GM10248 (cell line): ENCODE measurements at regions of chr1 and their contacts with region 1.

Region 1: GRCh38 chr1:66242646-66243547 is 291.1 kb upstream of the SGIP1 start:
- DNase-seq: peak; percentile 64
- CTCF ChIP-seq: peak; percentile 100

Region 2: GRCh38 chr1:65958561-65959350 is 284.1 kb before region 1 on chr1:
- CTCF ChIA-PET with region 1: interaction called, 149 read pairs
- POLR2A ChIA-PET with region 1: no interaction called
- DNase-seq: peak; percentile 33
- CTCF ChIP-seq: peak; percentile 40

Region 3: DNA sequence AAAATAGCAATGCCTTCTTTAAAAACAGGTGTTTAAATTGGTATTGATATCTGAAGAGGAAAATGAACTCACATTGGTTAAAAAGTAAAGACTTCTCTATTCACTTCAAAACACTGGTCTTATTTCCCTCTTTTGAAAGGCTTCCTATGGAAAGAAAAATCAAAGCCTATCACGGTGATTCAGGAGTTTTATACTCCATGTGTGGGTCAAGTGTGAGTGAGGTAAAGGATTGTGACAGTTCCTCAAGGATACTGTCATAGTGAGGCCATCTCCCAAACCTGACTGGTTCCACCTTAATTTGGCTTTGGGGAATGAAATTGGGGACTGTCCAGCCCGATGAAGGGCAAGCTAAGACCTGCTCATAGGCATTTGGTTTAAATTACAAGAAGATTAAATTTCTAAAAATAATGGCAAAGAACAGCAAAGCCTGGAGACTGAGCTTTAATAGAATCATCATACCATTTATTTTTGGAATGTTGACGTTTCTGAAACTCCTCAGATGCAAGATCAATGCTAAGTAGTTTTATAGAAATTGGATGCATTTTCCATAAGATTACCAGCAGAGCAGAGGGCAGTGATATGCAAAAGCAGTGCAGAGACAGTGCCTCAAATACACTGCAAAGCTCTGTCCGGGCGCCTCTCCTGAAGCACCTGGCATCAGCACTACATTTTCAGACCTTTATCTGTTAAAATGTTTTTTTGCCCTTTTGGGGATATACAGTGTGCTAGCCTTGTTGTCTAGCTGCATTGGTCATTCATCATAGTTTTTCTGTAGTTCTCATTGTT is 11.0 kb before region 1 on chr1:
- CTCF ChIA-PET with region 1: interaction called, 32 read pairs
- POLR2A ChIA-PET with region 1: no interaction called
- DNase-seq: no peak
- CTCF ChIP-seq: no peak

Region 4: GRCh38 chr1:66262211-66262963 is 19.5 kb after region 1 on chr1:
- CTCF ChIA-PET with region 1: interaction called, 21 read pairs
- POLR2A ChIA-PET with region 1: no interaction called
- DNase-seq: no peak
- CTCF ChIP-seq: no peak

Region 5: GRCh38 chr1:66503841-66504470 is 261.1 kb after region 1 on chr1:
- CTCF ChIA-PET with region 1: interaction called, 24 read pairs
- POLR2A ChIA-PET with region 1: no interaction called
- DNase-seq: peak; percentile 18
- CTCF ChIP-seq: peak; percentile 69